ENCODE measurements at regions of chr5 and their contacts with region 1.

Region 1: GRCh38 chr5:74648835-74649293 is 8.3 kb upstream of the ENC1 start:
- DNase-seq: no peak
- H3K4me3 ChIP-seq: no peak overlapping the region
- H3K27ac ChIP-seq: no peak overlapping the region
- H3K27me3 ChIP-seq: no peaks in the 10 kb centered on the region
- CTCF ChIP-seq: peak; percentile 71

Region 2: GRCh38 chr5:73911761-73912393 is 737.0 kb before region 1 on chr5:
- CTCF ChIA-PET with region 1: interaction called, 18 read pairs
- POLR2A ChIA-PET with region 1: interaction called, 3 read pairs
- DNase-seq: no peak
- H3K4me3 ChIP-seq: no peak overlapping the region
- H3K27ac ChIP-seq: no peak overlapping the region
- H3K27me3 ChIP-seq: no peaks in the 10 kb centered on the region
- CTCF ChIP-seq: no peak

Region 3: DNA sequence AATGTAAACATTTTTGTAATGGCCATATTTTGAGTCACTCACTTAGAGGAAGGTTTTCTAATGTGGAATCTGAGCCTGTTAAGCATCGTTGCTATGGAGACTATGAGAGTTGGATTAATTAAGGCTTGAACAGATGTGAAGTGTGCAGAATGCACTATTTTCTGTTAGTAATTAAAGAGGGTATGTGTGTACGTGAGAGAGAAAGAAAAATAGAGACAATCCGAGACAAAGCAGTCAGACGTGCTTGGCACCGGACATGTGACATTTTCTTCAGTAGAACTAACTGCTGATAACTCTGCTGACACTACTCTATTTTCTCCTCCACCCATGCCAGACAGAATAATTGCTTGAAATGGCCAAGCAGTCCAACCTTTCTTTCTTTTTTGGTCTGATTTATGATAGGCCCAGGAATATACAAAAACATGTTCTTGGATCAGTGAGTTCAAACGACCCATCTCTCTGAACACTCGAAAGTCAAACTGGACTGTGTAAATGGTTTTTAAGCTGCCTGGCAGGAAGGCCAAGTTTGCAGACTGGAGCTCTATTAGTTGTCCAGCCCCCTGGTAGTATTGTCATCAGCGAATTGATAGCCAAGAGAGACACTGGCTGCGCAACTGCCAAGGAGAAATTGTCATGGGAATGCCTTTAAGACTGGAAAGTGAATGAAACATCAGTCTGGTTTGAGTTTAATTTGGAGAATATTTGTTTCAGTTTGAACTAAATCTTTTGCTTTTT is 700.8 kb before region 1 on chr5:
- CTCF ChIA-PET with region 1: interaction called, 11 read pairs
- POLR2A ChIA-PET with region 1: no interaction called
- DNase-seq: no peak
- H3K4me3 ChIP-seq: no peak overlapping the region
- H3K27ac ChIP-seq: no peak overlapping the region
- H3K27me3 ChIP-seq: no peaks in the 10 kb centered on the region
- CTCF ChIP-seq: no peak

Region 4: DNA sequence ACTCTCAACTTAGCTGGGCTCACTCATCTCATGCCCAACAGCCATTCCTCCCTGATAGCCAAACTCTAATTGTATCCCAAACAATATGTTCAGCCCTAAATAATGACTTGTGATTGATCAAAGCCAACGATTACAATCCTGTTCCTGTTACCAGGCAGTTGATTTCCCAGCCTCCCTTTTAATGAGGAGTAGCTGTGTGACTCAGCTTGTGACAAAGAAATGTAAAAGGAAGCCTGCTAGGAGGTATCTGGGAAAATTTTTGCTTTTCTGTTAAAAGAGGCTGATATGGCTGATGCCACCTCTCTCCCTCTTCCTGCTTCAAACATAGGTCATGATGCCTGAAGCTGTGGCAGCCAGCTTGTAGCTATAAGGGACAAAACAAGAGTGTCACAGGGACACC is 11.3 kb after region 1 on chr5:
- CTCF ChIA-PET with region 1: interaction called, 11 read pairs
- POLR2A ChIA-PET with region 1: no interaction called
- DNase-seq: no peak
- H3K4me3 ChIP-seq: no peak overlapping the region
- H3K27ac ChIP-seq: no peak overlapping the region
- H3K27me3 ChIP-seq: no peaks in the 10 kb centered on the region
- CTCF ChIP-seq: no peak